Activated CD4-positive, alpha-beta memory T cell treated with anti-CD3 and anti-CD28 coated beads for 36 hours (primary cell): ENCODE measurements at regions of chr12 and their contacts with region 1.

Region 1: GRCh38 chr12:123801573-123802178 is 39.6 kb downstream of the DNAH10 start:
- DNase-seq: no peak
- H3K4me3 Mint-ChIP-seq: no peak overlapping the region
- H3K27ac Mint-ChIP-seq: no peak overlapping the region
- H3K4me1 Mint-ChIP-seq: no peaks in the 10 kb centered on the region
- H3K27me3 Mint-ChIP-seq: peaks cover 3% of the 10 kb centered on the region

Region 2: DNA sequence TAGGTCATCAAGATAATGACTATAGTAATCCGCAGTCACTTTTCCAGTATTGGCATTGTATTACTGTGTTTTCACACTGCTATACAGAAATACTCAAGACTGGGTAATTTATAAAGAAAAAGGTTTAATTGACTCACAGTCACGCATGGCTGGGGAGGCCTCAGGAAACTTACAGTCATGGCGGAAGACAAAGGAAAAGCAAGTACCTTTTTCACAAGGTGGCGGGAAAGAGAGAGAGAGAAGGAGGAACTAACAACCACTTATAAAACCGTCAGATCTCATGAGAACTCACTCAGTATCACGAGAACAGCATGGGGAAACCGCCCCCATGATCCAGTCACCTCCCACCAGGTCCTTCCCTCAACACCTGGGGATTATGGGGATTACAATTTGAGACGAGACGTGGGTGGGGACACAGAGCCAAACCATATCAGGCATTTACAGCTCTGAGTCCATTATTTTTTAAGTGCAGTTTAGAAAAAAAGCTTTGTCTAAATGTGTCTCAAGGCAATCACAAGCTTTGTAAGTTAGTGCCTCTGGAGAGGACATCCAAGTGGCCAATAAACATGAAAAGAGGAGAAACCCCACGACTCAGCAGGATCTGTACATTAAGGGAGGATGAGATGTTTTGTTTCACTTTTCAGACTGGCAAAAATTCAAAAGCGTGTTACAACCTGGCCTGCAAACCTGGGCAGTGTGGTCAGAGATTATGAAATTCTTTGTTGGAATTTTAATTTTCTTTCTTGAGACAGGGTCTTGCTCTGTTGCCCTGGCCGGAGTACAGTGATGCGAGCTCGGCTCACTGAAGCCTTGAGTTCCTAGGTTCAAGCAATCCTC is 42.5 kb after region 1 on chr12:
- CTCF ChIA-PET with region 1: interaction called, 12 read pairs
- POLR2A ChIA-PET with region 1: no interaction called
- intact Hi-C with region 1: loop called (anchors 1 kb)
- DNase-seq: no peak
- H3K4me3 Mint-ChIP-seq: no peak overlapping the region
- H3K27ac Mint-ChIP-seq: no peak overlapping the region
- H3K4me1 Mint-ChIP-seq: peaks cover 2% of the 10 kb centered on the region
- H3K27me3 Mint-ChIP-seq: peaks cover 3% of the 10 kb centered on the region